Cardiac septum (tissue), 1 donor: ENCODE measurements at regions of chr15 and their contacts with region 1.

Region 1: GRCh38 chr15:66841953-66842681 is 140.1 kb downstream of the SMAD6 start:
- DNase-seq: peak; percentile 94

Region 2: GRCh38 chr15:66619151-66619903 is 222.8 kb before region 1 on chr15:
- intact Hi-C with region 1: no loop called
- DNase-seq: peak; percentile 86

Region 3: GRCh38 chr15:66803182-66803729 is 38.9 kb before region 1 on chr15:
- intact Hi-C with region 1: loop called (anchors 2 kb)
- DNase-seq: peak; percentile 89

Region 4: GRCh38 chr15:67303490-67304363 is 461.6 kb after region 1 on chr15:
- intact Hi-C with region 1: no loop called
- DNase-seq: no peak